Ovary (tissue), 10 donors: ENCODE measurements at regions of chr2 and their contacts with region 1.

Region 1: GRCh38 chr2:85635636-85636035 is 19.6 kb downstream of the USP39 start:
- DNase-seq: no peak
- H3K4me3 ChIP-seq: no peak overlapping the region
- H3K27ac ChIP-seq: no peak overlapping the region
- H3K4me1 ChIP-seq: peaks cover 2% of the 10 kb centered on the region
- H3K27me3 ChIP-seq: no peaks in the 10 kb centered on the region
- CTCF ChIP-seq: no peak
- EP300 ChIP-seq: no peak
- POLR2A ChIP-seq: no peak

Region 2: GRCh38 chr2:85409845-85410583 is 225.6 kb before region 1 on chr2 and contains the start of gene CAPG:
- intact Hi-C with region 1: no loop called
- DNase-seq: no peak
- H3K4me3 ChIP-seq: no peak within 1 kb of the TSS
- H3K27ac ChIP-seq: no peak within 1 kb of the TSS
- H3K4me1 ChIP-seq: no peaks in the 10 kb centered on the region
- H3K27me3 ChIP-seq: no peaks in the 10 kb centered on the region
- CTCF ChIP-seq: no peak
- EP300 ChIP-seq: no peak
- POLR2A ChIP-seq: no peak
- total RNA-seq, gene CAPG: 6.8 to 97.8 (median 23.6) TPM

Region 3: DNA sequence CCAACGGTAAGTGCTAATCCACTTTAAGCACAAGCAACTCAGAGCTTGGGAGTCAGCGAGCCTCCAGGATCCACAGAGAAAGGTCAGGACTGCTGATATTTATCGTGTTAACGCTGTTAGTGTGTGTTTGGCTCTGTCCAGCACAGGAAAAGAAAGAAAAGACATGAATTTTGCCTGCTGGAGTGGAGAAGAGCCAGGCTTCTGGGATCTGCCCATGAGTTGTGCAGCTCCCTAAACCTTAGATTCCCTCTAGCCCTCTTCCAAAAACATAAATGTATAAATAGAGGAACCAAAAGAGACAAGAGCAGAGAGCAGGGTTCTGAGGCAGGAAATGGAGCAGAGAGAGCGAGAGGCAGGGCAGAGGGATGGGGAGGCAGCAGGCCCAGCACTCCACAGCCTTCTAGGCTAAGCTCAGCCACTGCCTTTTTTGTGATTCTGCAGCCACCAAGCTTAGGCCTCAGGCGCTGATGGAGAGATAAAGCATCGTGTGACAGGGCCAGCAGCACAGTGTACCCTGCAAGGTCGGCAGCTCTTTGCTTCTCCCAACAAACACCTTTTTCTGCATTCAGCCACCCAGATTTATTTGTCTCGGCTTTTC is 111.2 kb before region 1 on chr2:
- intact Hi-C with region 1: no loop called
- DNase-seq: no peak
- H3K4me3 ChIP-seq: no peak overlapping the region
- H3K27ac ChIP-seq: no peak overlapping the region
- H3K4me1 ChIP-seq: peaks cover 5% of the 10 kb centered on the region
- H3K27me3 ChIP-seq: no peaks in the 10 kb centered on the region
- CTCF ChIP-seq: no peak
- EP300 ChIP-seq: no peak
- POLR2A ChIP-seq: no peak

Region 4: GRCh38 chr2:85674456-85674816 is 38.8 kb after region 1 on chr2:
- intact Hi-C with region 1: loop called in 1 of 4 experiments (anchors 5 kb)
- DNase-seq: no peak
- H3K4me3 ChIP-seq: no peak overlapping the region
- H3K27ac ChIP-seq: no peak overlapping the region
- H3K4me1 ChIP-seq: peaks cover 8% of the 10 kb centered on the region
- H3K27me3 ChIP-seq: no peaks in the 10 kb centered on the region
- CTCF ChIP-seq: no peak
- EP300 ChIP-seq: no peak
- POLR2A ChIP-seq: no peak

Region 5: GRCh38 chr2:85712849-85713602 is 77.4 kb after region 1 on chr2:
- intact Hi-C with region 1: loop called in 2 of 4 experiments (anchors 5 kb)
- DNase-seq: peak in 1 of 5 donors; percentile 42
- H3K4me3 ChIP-seq: no peak overlapping the region
- H3K27ac ChIP-seq: peak overlapping the region in 1 of 2 donors; percentile 57
- H3K4me1 ChIP-seq: peaks cover 28% of the 10 kb centered on the region
- H3K27me3 ChIP-seq: no peaks in the 10 kb centered on the region
- CTCF ChIP-seq: no peak
- EP300 ChIP-seq: no peak
- POLR2A ChIP-seq: no peak

Region 6: DNA sequence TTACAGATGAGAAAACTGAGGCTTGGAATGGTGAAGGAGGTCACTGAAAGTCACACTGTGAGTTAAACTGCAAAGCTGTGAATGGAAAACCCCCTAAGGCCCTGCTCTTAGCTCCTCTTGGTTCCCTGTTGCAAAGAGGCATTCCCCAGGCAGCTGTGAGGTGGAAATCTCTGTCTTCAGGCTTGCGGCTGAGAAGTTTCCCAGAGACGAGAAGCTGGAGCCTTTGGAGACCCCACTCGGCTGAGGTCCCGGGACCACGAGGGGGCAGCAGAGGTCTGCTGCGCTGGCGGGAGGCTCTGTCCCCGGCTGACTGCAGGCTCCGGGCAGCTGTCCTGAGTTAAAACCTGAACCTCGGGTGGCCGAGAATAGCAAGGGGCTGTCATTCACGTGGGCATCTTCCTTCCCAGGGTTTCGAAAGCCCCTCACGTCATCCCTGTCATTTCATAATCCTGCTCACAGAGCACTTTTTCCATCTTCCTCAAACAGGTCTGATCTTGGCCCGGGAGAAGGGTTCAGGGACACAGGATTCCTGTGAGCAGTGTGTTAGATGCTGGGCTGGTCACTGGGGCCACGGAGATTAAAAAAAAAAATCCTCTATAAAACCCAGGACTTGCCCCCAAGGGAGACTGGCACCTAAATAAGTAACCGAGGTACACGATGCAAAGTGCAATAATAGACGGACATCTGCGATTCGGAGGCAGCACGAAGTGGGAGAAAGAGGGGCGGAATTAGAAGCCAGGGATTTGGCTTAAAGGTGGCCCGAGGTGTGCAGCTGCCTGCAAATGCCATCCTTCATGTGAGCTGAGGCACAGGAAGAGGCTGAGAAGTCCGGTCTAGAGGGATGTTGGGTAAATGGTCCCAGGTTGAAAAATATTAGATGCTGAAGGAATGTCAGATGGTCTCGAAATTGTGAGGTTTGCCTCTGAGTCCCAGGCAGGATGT is 93.5 kb after region 1 on chr2:
- intact Hi-C with region 1: loop called in 1 of 4 experiments (anchors 5 kb)
- DNase-seq: peak; percentile 87 to 94 (median 93)
- H3K4me3 ChIP-seq: no peak overlapping the region
- H3K27ac ChIP-seq: no peak overlapping the region
- H3K4me1 ChIP-seq: no peaks in the 10 kb centered on the region
- H3K27me3 ChIP-seq: no peaks in the 10 kb centered on the region
- CTCF ChIP-seq: peak; percentile 92 to 94 (median 94)
- EP300 ChIP-seq: no peak
- POLR2A ChIP-seq: peak; percentile 20

Region 7: GRCh38 chr2:85804583-85804982 is 168.9 kb after region 1 on chr2:
- intact Hi-C with region 1: loop called in 1 of 4 experiments (anchors 5 kb)
- DNase-seq: peak in 1 of 5 donors; percentile 11
- H3K4me3 ChIP-seq: no peak overlapping the region
- H3K27ac ChIP-seq: no peak overlapping the region
- H3K4me1 ChIP-seq: no peaks in the 10 kb centered on the region
- H3K27me3 ChIP-seq: no peaks in the 10 kb centered on the region
- CTCF ChIP-seq: no peak
- EP300 ChIP-seq: no peak
- POLR2A ChIP-seq: no peak

Region 8: DNA sequence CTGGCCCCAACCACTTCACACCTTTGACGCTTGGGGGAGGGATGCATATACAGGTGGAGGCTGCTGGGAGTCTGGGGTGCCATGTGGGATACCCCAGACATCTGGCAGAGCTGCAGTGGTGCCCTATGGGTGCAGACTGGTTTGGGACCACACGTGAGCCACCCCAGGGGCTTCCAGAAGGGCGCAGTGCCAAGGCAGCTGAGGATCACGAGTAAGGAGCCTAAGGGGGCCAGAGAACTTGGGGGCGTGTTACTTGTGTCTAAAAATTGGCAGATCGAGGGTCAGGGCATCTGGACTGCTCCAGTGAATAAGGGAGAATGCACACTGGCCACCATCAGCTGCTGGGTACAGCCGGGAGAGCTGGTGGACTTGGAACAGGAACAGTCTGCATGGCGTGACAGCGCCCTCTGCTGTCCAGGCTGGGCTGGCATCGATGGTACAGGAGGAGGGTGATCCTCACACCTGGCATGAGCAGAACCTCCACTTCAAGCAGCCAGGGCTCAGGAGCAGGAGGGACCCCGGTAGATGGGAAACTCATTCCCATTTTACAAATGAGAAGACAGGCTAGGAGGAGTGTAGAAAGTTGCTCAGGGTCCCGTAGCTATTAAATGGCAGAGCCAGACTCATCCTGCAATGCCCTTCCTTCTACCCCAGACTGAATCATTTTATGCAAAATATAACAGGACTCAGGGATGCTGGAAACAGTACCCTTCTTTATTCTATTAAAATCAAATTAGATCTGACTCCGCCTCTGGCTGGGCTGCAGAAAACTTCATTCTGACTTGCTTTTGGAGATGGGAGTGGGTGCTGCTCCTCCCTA is 178.6 kb after region 1 on chr2:
- intact Hi-C with region 1: loop called in 3 of 4 experiments (anchors 5 kb)
- DNase-seq: peak; percentile 90 to 94 (median 94)
- H3K4me3 ChIP-seq: no peak overlapping the region
- H3K27ac ChIP-seq: no peak overlapping the region
- H3K4me1 ChIP-seq: peaks cover 9% of the 10 kb centered on the region
- H3K27me3 ChIP-seq: no peaks in the 10 kb centered on the region
- CTCF ChIP-seq: peak; percentile 86 to 97 (median 96)
- EP300 ChIP-seq: no peak
- POLR2A ChIP-seq: no peak

Region 9: DNA sequence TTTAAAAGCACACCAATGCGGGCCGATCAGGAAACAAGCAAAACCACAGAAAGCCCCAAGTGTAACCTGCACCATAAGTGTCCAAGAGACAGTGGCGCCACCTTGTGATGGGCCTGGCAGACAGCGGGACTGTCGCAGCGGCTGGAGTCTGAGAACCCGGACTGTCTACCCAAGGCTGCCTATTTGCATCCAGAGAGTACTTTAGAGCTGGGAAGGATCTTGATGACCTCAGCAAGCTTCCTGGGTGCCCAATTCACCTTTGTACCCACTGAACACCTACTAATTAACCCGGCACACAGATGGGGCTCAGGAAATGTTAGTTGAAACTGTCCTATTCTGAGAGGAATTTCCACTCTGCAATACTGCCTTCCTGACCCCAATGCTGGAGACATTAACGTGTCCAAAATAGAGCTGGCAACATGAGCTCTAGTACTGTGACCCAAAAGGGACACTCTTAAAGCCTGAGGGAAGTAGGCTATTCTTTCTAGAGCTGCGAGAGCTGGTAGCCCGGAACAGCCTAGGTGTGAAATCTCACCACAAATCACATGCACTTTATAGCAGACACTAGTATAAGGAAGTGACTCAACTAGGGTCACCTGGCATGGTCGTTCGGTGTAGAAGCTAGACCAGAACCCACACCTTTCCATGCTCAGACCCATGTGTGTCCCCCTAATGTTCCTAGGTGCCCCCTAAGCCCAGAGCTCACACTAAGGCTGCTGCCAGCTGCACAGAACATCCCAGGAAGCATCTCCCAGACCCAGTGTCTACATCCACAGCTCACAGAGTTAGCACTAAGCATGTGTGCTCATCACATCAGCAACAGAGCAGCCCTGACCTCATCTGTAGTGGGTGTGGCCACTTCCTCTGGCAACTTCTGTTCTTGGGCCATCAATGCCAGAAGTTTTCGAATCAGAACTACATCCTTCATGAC is 444.6 kb after region 1 on chr2:
- intact Hi-C with region 1: loop called in 1 of 4 experiments (anchors 10 kb)
- DNase-seq: peak; percentile 79 to 88 (median 85)
- H3K4me3 ChIP-seq: no peak overlapping the region
- H3K27ac ChIP-seq: no peak overlapping the region
- H3K4me1 ChIP-seq: no peaks in the 10 kb centered on the region
- H3K27me3 ChIP-seq: no peaks in the 10 kb centered on the region
- CTCF ChIP-seq: peak; percentile 49 to 72 (median 71)
- EP300 ChIP-seq: no peak
- POLR2A ChIP-seq: no peak